Heart left ventricle (tissue), 16 donors: ENCODE measurements at regions of chr17 and their contacts with region 1.

Region 1: GRCh38 chr17:42422958-42423712 is at the start of gene CAVIN1:
- DNase-seq: peak; percentile 99 to 100 (median 100)
- ATAC-seq: peak; percentile 90 to 96 (median 92)
- H3K4me3 ChIP-seq: peak within 1 kb of the TSS; percentile 71 to 100 (median 92)
- H3K27ac ChIP-seq: peak within 1 kb of the TSS; percentile 93 to 100 (median 99)
- H3K4me1 ChIP-seq: peaks cover 6 to 54% (median 36%) of the 10 kb centered on the region in 12 donors
- H3K27me3 ChIP-seq: peaks cover 0 to 31% (median 0%) of the 10 kb centered on the region in 9 donors
- CTCF ChIP-seq: peak in 2 of 12 donors; percentile 13 to 22
- POLR2A ChIP-seq: peak; percentile 77 to 97
- total RNA-seq, gene CAVIN1: 195 to 318 (median 253) TPM

Region 2: DNA sequence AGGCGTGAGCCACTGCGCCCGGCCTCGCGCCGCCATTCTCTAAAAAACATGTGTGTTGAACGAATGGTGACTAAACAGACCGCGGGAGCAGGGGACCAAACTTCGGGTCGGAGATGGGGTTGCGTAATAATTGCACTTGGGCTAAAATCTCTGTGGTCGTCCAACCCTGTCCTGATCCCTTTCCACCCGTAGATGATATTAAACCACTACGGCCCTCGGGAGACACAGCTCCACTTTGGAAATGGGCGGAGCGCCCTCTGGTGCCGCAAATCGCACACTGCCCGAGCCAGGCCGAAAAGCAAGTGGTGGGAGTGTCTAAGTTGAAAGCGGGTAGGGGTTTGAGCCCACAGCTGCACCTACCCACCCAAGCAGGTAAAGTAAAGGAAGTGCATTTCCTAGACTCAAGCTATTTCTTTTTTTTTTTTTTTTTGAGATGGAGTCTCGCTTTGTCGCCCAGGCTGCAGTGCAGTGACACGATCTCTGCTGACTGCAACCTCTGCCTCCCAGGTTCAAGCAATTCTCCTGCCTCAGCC is 17.1 kb before region 1 on chr17:
- intact Hi-C with region 1: loop called in 2 of 10 experiments (anchors 2 kb)
- DNase-seq: peak; percentile 83 to 92 (median 83)
- ATAC-seq: peak; percentile 56 to 73 (median 68)
- H3K4me3 ChIP-seq: peak overlapping the region in 7 of 12 donors; percentile 8 to 33 (median 20)
- H3K27ac ChIP-seq: peak overlapping the region; percentile 65 to 100 (median 82)
- H3K4me1 ChIP-seq: peaks cover 27 to 93% (median 79%) of the 10 kb centered on the region in 12 donors
- H3K27me3 ChIP-seq: no peaks in the 10 kb centered on the region
- CTCF ChIP-seq: peak; percentile 77 to 92 (median 84)
- POLR2A ChIP-seq: no peak